ENCODE measurements at regions of chr1 and their contacts with region 1.

Region 1: GRCh38 chr1:159214149-159214760 is 9.6 kb downstream of the ACKR1 start:
- DNase-seq: peak; percentile 62
- H3K27ac ChIP-seq: no peak overlapping the region
- CTCF ChIP-seq: peak; percentile 93

Region 2: DNA sequence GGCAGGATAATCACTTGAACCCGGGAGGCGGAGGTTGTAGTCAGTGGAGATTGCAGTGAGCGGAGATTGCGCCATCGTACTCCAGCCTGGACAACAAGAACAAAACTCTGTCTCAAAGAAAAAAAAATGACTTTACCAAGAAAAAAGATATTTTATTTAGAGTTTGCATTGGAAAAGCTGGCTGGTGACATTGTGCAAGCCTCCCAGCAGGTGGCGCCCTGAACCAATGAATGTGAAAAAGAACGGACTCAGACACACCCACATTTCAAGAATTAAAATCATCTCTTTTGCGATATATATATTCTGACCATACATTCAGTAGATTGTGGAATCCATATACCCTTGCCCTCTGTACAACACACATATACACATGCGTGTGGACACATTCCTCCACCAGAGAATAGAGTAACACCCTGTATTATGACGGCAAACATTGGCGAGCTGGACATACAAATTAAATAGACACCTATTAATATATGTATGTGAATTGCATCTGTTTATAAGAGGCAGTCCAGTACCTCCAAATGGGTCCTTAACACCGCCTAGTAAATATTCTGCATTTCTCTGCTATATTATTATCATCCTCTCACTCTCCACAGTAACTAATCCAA is 81.9 kb before region 1 on chr1:
- CTCF ChIA-PET with region 1: interaction called, 16 read pairs
- POLR2A ChIA-PET with region 1: no interaction called
- DNase-seq: peak; percentile 78
- H3K27ac ChIP-seq: no peak overlapping the region
- CTCF ChIP-seq: peak; percentile 85

Region 3: DNA sequence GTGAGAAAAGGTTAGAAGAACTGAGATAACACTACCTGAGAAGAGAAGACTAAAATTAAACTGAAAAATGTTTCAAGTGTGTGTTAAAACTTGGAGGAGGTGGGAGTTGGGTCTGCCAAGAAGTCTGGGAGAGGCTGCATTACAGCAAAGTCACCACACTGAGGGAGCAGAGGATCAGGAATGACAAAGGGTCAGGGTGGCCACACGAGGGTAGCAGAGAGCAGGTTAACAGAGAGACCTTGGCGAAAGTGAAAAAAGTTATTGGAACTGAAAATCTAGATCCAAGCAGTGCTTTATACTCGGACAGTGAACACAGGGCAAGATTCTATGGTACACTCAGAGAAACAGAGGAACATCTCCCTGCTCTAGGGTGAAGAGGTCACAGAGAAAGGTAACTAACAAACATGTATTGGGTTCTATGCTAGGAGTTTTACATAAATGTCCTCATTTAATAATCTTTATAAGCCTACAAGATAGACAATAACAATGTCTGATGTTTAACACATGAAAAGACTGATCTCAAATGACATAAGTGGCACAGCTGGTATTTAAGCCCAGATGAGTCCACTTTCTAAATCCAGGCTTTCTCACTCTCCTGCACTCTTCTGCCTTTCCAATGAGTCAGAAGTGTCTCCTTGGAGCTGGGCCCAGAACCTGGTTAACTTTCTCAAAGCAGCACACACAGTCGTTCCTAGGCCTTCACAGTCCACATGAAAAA is 53.1 kb before region 1 on chr1:
- CTCF ChIA-PET with region 1: interaction called, 11 read pairs
- POLR2A ChIA-PET with region 1: no interaction called
- DNase-seq: peak; percentile 78
- H3K27ac ChIP-seq: peak overlapping the region; percentile 67
- CTCF ChIP-seq: peak; percentile 97